Prostate gland (tissue), 2 donors: ENCODE measurements at regions of chr18 and their contacts with region 1.

Region 1: GRCh38 chr18:36693931-36694620 is 134.7 kb downstream of the TPGS2 start:
- DNase-seq: peak; percentile 32
- H3K4me3 ChIP-seq: peak overlapping the region; percentile 5 to 23
- H3K27ac ChIP-seq: peak overlapping the region; percentile 67 to 74
- H3K4me1 ChIP-seq: no peaks in the 10 kb centered on the region
- H3K27me3 ChIP-seq: no peaks in the 10 kb centered on the region
- CTCF ChIP-seq: no peak
- POLR2A ChIP-seq: no peak

Region 2: DNA sequence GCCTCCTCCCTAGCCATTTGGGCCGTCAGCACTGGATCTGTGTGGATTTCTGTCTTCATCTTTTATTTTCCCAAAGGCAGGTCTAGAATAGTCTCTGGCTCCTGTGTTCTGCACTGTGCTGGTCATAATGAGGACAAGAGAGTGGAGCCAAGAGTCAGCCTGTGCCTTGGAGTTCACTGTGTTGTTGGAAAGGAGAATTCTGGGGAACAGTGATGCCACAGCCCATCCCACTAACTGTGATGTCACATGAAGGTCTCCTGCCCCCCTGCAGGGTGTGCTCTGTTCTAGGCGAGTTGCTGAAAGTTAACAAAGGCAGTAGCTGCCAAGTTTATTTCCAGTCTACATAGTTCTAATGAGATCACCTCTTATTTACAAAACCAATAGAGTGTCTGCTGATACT is 113.8 kb before region 1 on chr18:
- intact Hi-C with region 1: loop called (anchors 5 kb)
- DNase-seq: no peak
- H3K4me3 ChIP-seq: no peak overlapping the region
- H3K27ac ChIP-seq: peak overlapping the region; percentile 65 to 75
- H3K4me1 ChIP-seq: no peaks in the 10 kb centered on the region
- H3K27me3 ChIP-seq: no peaks in the 10 kb centered on the region
- CTCF ChIP-seq: no peak
- POLR2A ChIP-seq: no peak